A549 (cell line): ENCODE measurements at regions of chr12 and their contacts with region 1.

Region 1: DNA sequence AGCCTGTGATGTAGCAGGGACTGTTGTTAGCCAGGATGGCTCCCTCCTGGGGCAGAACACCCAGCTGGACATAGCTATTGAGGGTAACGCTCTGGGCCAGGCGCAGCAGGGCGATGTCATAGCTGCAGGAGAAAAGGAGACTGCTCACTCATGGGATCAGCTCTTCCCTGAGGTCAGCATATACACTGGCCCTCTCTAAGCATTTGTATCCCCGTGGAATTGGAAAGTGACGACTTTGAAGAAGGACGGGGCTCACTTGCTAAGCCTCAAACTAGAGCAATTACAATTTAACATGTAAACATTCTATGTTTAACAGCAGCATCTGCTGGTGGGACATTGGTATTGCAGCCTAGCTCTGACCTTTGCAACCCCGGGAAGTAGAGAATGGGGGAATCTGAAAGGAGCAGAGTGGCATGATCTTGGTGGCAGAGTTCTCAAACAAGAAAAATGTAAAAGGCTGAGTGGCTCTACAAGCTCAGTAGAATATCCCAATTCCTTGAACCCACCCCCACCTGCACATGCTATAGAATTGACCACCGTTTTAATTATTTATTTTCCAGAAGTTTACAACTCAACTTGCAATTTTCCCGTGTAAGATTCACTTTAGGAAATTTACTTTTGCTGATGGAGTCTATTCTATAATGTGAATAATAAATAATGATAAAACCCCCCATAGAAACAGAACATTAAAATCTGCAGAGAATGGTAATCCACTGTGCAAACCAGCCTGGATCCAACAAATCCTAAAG is 5.0 kb downstream of the CELA1 start:
- DNase-seq: peak; percentile 78 to 84
- ATAC-seq: peak; percentile 90 to 92
- H3K4me3 ChIP-seq: no peak overlapping the region
- H3K27ac ChIP-seq: peak overlapping the region; percentile 53 to 70
- H3K4me1 ChIP-seq: peaks cover 10% of the 10 kb centered on the region
- CTCF ChIP-seq: peak; percentile 99
- EP300 ChIP-seq: no peak
- POLR2A ChIP-seq: no peak
- RAD21 ChIP-seq: peak; percentile 99

Region 2: DNA sequence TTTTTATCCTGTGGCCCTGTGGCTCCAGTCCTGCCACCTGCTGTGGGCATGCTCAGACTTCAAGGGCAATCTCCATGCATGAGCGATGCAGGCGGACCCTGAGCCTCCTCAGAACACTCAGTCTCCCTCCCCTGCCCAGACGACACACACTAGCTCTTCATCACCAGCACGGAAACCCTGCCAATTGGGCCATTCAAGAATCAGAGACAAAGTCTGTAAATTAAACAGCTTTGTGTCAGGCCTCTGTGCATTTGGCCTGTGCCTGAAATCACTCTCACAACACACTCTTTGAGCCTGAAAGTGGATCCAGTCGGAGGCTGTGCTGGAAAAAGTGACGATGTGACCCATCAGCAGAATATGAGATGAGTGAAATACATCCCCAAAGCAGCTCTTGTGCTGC is 136.1 kb before region 1 on chr12:
- CTCF ChIA-PET with region 1: interaction called, 5 read pairs
- POLR2A ChIA-PET with region 1: interaction called, 13 read pairs
- DNase-seq: no peak
- ATAC-seq: no peak
- H3K4me3 ChIP-seq: no peak overlapping the region
- H3K27ac ChIP-seq: no peak overlapping the region
- H3K4me1 ChIP-seq: 0 out of 3 replicates have a peak, but pooled peaks cover 3% of the 10 kb centered on the region
- CTCF ChIP-seq: no peak
- EP300 ChIP-seq: no peak
- POLR2A ChIP-seq: no peak
- RAD21 ChIP-seq: no peak

Region 3: DNA sequence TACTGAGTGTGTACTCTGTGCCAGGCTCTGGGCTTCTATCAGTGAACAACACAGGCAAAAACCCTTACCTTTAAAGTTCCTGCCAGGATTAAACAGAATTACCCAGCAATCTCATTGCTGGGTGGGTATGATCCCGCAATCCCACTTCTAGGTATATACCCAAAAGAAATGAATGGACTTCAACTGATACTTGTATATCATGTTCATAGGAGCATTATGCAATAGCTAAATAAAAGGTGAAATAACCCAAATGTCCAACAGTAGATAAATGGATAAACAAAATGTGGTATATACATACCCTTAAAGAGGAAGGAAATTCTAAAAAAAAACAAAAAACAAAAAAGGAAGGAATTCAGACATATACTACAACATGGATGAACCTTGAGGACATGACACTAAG is 88.2 kb before region 1 on chr12:
- CTCF ChIA-PET with region 1: interaction called, 16 read pairs
- POLR2A ChIA-PET with region 1: no interaction called
- DNase-seq: no peak
- ATAC-seq: no peak
- H3K4me3 ChIP-seq: no peak overlapping the region
- H3K27ac ChIP-seq: no peak overlapping the region
- H3K4me1 ChIP-seq: no peaks in the 10 kb centered on the region
- CTCF ChIP-seq: no peak
- EP300 ChIP-seq: no peak
- POLR2A ChIP-seq: no peak
- RAD21 ChIP-seq: no peak

Region 4: GRCh38 chr12:51281202-51281924 is 60.1 kb before region 1 on chr12:
- CTCF ChIA-PET with region 1: interaction called, 29 read pairs
- POLR2A ChIA-PET with region 1: no interaction called
- DNase-seq: peak in 1 of 2 experiments; percentile 16
- ATAC-seq: peak; percentile 59 to 61
- H3K4me3 ChIP-seq: no peak overlapping the region
- H3K27ac ChIP-seq: peak overlapping the region; percentile 26 to 65; a peak in 4 of 6 replicates
- H3K4me1 ChIP-seq: peaks cover 14% of the 10 kb centered on the region; the same call in 2 of the 3 replicates
- CTCF ChIP-seq: no peak
- EP300 ChIP-seq: no peak
- POLR2A ChIP-seq: no peak
- RAD21 ChIP-seq: no peak

Region 5: DNA sequence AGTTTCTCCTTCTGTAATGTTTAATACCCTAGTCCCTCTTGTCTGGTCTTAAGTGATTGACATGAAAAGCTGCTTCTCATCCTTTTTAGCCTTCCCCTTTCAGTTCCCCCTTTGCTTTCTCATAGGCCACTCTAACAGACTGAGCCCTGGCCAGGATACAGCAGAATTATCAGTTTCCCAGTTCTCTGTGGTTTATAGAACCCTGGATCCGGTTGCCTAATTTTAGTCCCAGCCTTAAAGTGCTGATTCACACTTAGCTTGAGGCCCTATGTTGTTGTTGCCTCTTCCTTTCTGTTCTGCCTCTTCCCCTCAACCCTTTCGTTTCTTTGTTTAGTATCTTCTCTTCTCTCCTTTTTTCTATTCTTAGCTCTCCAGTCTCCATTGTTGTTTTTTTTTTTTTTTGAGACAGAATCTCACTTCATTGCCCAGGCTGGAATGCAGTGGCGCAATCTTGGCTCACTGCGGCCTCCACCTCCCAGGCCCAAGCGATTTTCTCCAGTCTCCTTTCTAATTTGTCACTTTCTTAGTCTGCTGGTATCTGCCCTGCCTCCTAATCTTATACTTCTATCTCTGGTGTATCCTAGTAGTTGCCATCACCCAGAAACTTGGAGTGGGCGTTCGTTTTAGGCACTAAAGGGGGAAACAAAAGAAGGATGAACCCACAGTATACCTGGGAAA is 14.5 kb before region 1 on chr12:
- CTCF ChIA-PET with region 1: interaction called, 55 read pairs
- POLR2A ChIA-PET with region 1: no interaction called
- DNase-seq: peak in 1 of 2 experiments; percentile 42
- ATAC-seq: peak; percentile 62 to 67; a peak in 5 of 6 replicates
- H3K4me3 ChIP-seq: no peak overlapping the region
- H3K27ac ChIP-seq: peak overlapping the region; percentile 41 to 77
- H3K4me1 ChIP-seq: peaks cover 15% of the 10 kb centered on the region
- CTCF ChIP-seq: no peak
- EP300 ChIP-seq: no peak
- POLR2A ChIP-seq: no peak
- RAD21 ChIP-seq: no peak

Region 6: GRCh38 chr12:51371295-51371953 is 30.0 kb after region 1 on chr12:
- CTCF ChIA-PET with region 1: interaction called, 15 read pairs
- POLR2A ChIA-PET with region 1: no interaction called
- DNase-seq: peak; percentile 90 to 97
- ATAC-seq: peak; percentile 98 to 99
- H3K4me3 ChIP-seq: no peak overlapping the region
- H3K27ac ChIP-seq: peak overlapping the region; percentile 83 to 94
- H3K4me1 ChIP-seq: peaks cover 20% of the 10 kb centered on the region
- CTCF ChIP-seq: no peak
- EP300 ChIP-seq: no peak
- POLR2A ChIP-seq: no peak
- RAD21 ChIP-seq: 0 out of 5 replicates have a peak, but pooled peaks of 1 of the 2 experiments have one; percentile 15